ENCODE measurements at regions of chr2 and their contacts with region 1.

Region 1: DNA sequence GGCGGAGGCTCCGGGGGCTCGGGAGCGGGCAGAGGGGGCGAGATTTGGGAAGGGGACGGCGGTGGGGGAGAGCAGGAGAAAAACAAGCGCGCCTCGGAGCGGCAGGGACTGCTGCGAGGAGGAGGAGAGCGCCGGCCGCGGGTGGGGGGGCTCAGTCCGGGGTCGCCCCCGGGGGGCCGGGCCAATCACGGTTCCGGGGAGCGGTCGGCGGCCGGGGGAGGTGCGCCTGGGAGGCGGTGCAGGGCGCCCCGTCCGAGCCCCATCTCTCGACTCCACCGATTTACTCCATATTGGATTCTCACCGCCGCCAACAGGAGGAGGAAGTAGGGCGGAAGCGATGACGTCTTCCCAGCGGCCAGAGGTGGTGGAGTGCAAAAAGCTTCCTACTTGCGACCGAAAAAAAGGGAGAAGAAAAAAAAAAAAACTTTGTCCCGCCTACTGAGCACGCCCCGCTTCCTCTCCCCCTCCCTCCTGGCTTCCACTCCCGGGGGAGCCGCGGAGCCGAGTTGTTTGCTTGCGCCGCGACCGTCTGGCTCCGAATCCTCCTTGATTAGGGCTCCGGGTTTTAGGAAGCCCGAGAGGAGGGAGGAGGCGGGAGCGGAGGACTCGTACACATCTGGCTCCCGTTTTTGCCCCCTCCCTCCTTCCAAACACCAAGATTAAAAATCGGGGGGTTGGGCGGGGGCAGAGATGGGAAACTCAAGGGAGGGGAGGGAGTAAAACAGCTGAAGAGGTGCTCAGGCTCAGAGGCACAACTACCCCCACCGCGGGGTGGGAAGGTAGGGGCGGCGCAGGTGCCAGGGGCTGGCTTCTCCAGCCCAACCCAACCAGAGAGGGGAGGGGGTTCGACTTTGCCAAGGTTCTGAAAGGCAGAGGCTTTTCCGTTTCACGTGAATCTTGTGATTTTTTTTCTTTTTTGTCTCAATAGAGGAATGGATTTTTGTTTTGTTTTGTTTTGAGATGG is at the start of gene SPRED2:
- H3K4me3 Mint-ChIP-seq: peak within 1 kb of the TSS; percentile 87
- H3K27ac Mint-ChIP-seq: peak within 1 kb of the TSS; percentile 87
- H3K4me1 Mint-ChIP-seq: peaks cover 21% of the 10 kb centered on the region
- H3K27me3 Mint-ChIP-seq: peaks cover 44% of the 10 kb centered on the region

Region 2: GRCh38 chr2:65278531-65278981 is 154.0 kb before region 1 on chr2:
- intact Hi-C with region 1: loop called (anchors 5 kb)
- H3K4me3 Mint-ChIP-seq: no peak overlapping the region
- H3K27ac Mint-ChIP-seq: no peak overlapping the region
- H3K4me1 Mint-ChIP-seq: peaks cover 5% of the 10 kb centered on the region
- H3K27me3 Mint-ChIP-seq: peaks cover 1% of the 10 kb centered on the region